Adrenal gland (tissue), 19 donors: ENCODE measurements at regions of chr3 and their contacts with region 1.

Region 1: DNA sequence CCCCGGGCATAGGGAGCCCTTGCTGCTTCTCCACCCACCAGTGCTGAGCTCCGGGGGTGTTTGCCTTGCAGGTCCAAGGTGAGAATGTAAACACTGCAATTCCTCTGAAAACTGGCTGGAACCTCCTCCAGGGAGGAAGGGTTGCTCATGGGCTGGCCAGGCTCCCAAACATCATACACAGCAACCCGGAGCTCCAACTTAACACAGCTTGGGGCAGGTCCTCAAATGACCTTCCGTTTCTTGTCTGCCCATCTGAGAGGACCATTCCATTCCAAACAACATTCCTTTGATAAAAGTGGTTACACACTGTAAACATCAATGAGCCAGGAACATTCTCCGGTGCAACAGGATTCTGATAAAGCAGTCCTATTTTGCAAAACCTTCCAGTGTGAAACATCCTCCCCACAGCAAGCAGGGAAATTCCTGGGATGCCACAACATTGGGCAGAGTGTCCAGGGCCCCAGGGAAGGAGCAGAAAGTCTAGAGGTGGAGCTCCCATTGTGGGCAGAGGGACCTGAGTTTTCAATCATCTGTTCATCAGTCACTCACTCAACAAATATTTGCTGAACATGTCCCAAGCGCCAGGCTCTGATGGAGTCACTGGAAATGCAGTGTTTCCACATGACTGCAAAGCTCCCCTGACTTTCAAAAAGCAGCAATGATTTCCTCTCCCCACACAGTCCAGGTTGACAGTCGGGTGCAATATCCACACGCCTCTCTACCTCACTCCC is 7.3 kb upstream of the HEG1 start:
- DNase-seq: peak in 4 of 7 donors; percentile 31 to 56 (median 36)
- H3K4me3 ChIP-seq: no peak overlapping the region
- H3K27ac ChIP-seq: peak overlapping the region in 1 of 5 donors; percentile 18
- H3K4me1 ChIP-seq: peaks cover 0 to 10% of the 10 kb centered on the region in 2 donors
- H3K27me3 ChIP-seq: no peaks in the 10 kb centered on the region
- CTCF ChIP-seq: no peak
- POLR2A ChIP-seq: no peak

Region 2: GRCh38 chr3:124246949-124247348 is 816.1 kb before region 1 on chr3:
- intact Hi-C with region 1: no loop called
- DNase-seq: no peak
- H3K4me3 ChIP-seq: no peak overlapping the region
- H3K27ac ChIP-seq: peak overlapping the region in 3 of 5 donors; percentile 13 to 29 (median 26)
- H3K4me1 ChIP-seq: peaks cover 20 to 25% of the 10 kb centered on the region in 2 donors
- H3K27me3 ChIP-seq: no peaks in the 10 kb centered on the region
- CTCF ChIP-seq: peak in 4 of 6 experiments; percentile 20 to 31 (median 21)
- POLR2A ChIP-seq: no peak

Region 3: GRCh38 chr3:125024817-125025216 is 38.2 kb before region 1 on chr3:
- intact Hi-C with region 1: no loop called
- DNase-seq: no peak
- H3K4me3 ChIP-seq: no peak overlapping the region
- H3K27ac ChIP-seq: peak overlapping the region in 1 of 5 donors; percentile 18
- H3K4me1 ChIP-seq: peaks cover 6 to 12% of the 10 kb centered on the region in 2 donors
- H3K27me3 ChIP-seq: no peaks in the 10 kb centered on the region
- CTCF ChIP-seq: no peak
- POLR2A ChIP-seq: no peak

Region 4: DNA sequence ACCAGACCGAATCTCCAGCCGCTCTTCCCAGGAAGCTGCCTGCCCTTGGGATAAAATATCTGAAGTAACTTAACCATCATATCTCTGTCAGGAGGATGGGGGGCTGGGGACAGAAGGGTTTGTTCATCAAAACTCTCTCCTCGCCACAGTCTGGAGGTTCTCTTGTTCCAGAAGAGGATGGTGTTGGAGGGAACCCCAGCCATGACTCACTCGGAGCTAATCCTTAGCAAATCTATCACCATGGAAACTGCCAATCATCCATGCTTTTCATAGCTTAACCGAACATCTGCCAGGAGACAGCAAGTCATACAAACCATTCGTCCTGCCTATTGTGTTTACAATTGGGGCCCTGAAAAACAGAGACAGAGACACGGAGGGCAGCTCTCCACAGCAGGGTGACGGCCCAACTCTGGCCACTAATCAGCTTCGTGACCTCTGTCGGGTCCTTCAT is 66.5 kb after region 1 on chr3:
- intact Hi-C with region 1: loop called in 1 of 2 experiments (anchors 10 kb)
- DNase-seq: peak; percentile 66 to 91 (median 88)
- H3K4me3 ChIP-seq: no peak overlapping the region
- H3K27ac ChIP-seq: peak overlapping the region in 1 of 5 donors; percentile 38
- H3K4me1 ChIP-seq: peaks cover 3 to 19% of the 10 kb centered on the region in 2 donors
- H3K27me3 ChIP-seq: no peaks in the 10 kb centered on the region
- CTCF ChIP-seq: no peak
- POLR2A ChIP-seq: no peak

Region 5: DNA sequence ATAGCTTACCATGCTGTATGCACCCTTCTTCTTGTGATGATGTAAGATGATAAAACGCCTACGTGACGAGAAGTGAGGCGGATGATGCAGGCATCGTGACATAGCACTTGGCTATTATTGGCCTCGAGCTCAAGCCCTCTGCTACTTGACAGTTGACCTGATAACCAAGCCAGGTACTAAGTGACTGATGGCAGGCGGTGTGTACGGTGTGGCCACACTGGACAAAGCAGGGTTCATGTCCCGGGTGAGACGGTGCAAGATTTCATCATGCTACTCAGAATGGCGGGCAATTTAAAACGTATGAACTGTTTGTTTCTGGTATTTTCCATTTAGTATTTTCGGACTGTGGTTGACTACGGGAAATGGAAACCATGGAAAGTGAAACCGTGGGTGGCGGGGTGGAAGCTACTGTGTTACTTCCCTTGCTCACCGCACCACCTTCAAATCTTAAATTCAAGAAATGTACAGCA is 91.8 kb after region 1 on chr3:
- intact Hi-C with region 1: no loop called
- DNase-seq: no peak
- H3K4me3 ChIP-seq: no peak overlapping the region
- H3K27ac ChIP-seq: no peak overlapping the region
- H3K4me1 ChIP-seq: no peaks in the 10 kb centered on the region
- H3K27me3 ChIP-seq: no peaks in the 10 kb centered on the region
- CTCF ChIP-seq: no peak
- POLR2A ChIP-seq: no peak

Region 6: DNA sequence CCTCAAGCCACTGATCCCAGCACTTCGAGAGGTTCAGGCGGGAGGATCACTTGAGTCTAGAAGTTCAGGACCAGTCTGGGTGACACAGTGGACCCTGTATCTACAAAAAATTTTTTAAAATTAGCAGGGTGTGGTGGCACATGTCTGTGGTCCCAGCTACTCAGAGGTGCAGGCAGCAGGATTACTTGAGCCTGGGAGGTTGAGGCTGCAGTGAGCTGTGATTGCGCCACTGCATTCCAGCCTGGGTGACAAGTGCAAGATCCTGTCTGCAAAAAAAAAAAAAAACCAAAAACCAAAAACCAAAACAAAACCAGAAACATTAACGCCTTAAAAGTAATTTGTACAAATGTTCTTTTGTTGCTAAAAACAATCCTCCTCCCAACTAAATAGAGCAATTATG is 177.4 kb after region 1 on chr3:
- intact Hi-C with region 1: no loop called
- DNase-seq: peak in 1 of 7 donors; percentile 34
- H3K4me3 ChIP-seq: no peak overlapping the region
- H3K27ac ChIP-seq: no peak overlapping the region
- H3K4me1 ChIP-seq: no peaks in the 10 kb centered on the region
- H3K27me3 ChIP-seq: no peaks in the 10 kb centered on the region
- CTCF ChIP-seq: no peak
- POLR2A ChIP-seq: no peak